ENCODE measurements at regions of chr21 and their contacts with region 1.

Region 1: GRCh38 chr21:41121785-41122421 is 46.1 kb upstream of the BACE2 start:
- DNase-seq: peak; percentile 90
- H3K4me3 ChIP-seq: no peak overlapping the region
- H3K27ac ChIP-seq: no peak overlapping the region
- H3K4me1 ChIP-seq: no peaks in the 10 kb centered on the region
- H3K27me3 ChIP-seq: no peaks in the 10 kb centered on the region
- CTCF ChIP-seq: peak; percentile 73 to 89 (median 81)
- POLR2A ChIP-seq: no peak

Region 2: GRCh38 chr21:41460578-41461527 is 338.9 kb after region 1 on chr21:
- intact Hi-C with region 1: loop called (anchors 5 kb)
- DNase-seq: peak; percentile 80
- H3K4me3 ChIP-seq: no peak overlapping the region
- H3K27ac ChIP-seq: peak overlapping the region; percentile 12 to 29
- H3K4me1 ChIP-seq: no peaks in the 10 kb centered on the region
- H3K27me3 ChIP-seq: no peaks in the 10 kb centered on the region
- CTCF ChIP-seq: peak; percentile 67 to 91 (median 77)
- POLR2A ChIP-seq: no peak